ENCODE measurements at regions of chr20 and their contacts with region 1.

Region 1: GRCh38 chr20:11274141-11274594 is 600.4 kb upstream of the JAG1 start:
- DNase-seq: peak; percentile 81
- H3K4me3 ChIP-seq: no peak overlapping the region
- H3K27ac ChIP-seq: no peak overlapping the region
- H3K4me1 ChIP-seq: no peaks in the 10 kb centered on the region
- H3K27me3 ChIP-seq: no peaks in the 10 kb centered on the region
- CTCF ChIP-seq: peak; percentile 48 to 61

Region 2: DNA sequence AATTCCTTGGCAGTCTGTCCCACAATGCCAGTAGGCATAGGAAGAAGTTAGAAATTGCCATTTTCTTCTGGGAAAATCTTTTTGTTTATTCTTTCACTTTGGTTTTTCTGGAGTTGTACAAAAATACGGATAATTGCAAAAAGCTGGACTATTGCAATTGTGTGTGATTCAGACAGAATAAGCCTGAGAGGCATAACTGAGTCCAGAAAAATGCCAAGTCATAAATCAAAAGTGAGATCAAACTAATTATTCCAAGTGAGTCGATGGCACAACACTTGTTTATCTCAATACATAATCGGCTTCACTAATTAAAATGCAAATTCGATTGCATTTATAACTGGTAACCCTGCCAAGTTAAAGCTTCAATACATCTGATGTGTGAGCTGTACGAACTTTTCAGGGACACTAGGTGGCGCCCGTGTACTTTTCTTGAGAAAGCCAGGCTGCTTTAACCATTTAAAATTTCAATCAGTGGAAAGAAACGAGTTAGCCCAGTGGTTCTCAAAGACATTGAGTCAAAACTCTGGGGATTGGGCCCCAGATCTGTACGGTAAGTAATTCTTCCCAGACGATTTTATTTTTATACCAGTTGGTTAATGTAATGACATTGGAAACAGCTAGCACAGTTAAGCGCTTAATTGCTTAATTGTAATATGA is 1657.2 kb before region 1 on chr20:
- CTCF ChIA-PET with region 1: no interaction called
- dilution Hi-C with region 1: no loop called
- in situ Hi-C with region 1: no loop called
- intact Hi-C with region 1: loop called (anchors 5 kb)
- DNase-seq: peak; percentile 38
- H3K4me3 ChIP-seq: no peak overlapping the region
- H3K27ac ChIP-seq: no peak overlapping the region
- H3K4me1 ChIP-seq: no peaks in the 10 kb centered on the region
- H3K27me3 ChIP-seq: peaks cover 2% of the 10 kb centered on the region
- CTCF ChIP-seq: peak; percentile 76 to 81

Region 3: DNA sequence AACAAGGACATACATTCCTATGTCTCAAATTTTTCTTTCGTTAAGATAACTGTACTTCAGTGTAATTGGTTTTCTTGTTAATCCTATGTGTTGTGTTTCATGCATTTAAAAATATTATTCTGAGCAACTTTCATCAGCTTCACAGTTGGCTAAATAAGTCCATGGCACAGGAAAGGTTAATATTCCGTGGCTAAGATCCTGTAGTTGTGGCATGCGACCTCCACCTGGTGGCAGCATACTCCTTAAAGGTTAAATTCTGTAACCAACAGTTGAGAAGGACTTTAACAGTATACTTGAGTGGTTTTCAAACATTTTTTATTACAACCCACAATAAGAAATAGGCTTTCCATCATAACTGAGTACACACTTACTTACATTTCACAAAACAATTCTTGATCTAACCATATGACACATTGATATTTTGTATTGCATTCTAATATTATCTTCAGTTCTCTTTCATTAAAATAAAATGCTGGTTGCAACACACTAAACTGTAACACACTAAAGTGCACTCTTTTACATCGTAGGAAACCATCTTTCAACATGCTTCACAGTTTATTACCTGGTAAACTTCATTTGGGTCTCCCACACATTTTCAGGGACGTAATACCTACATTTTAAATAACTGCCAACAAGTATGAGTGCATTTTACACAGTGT is 720.7 kb before region 1 on chr20:
- CTCF ChIA-PET with region 1: no interaction called
- dilution Hi-C with region 1: no loop called
- in situ Hi-C with region 1: loop called in 1 of 2 experiments (anchors 5 kb)
- intact Hi-C with region 1: loop called (anchors 1 kb)
- DNase-seq: peak; percentile 69
- H3K4me3 ChIP-seq: no peak overlapping the region
- H3K27ac ChIP-seq: no peak overlapping the region
- H3K4me1 ChIP-seq: peaks cover 55% of the 10 kb centered on the region
- H3K27me3 ChIP-seq: no peaks in the 10 kb centered on the region
- CTCF ChIP-seq: peak; percentile 81 to 95

Region 4: DNA sequence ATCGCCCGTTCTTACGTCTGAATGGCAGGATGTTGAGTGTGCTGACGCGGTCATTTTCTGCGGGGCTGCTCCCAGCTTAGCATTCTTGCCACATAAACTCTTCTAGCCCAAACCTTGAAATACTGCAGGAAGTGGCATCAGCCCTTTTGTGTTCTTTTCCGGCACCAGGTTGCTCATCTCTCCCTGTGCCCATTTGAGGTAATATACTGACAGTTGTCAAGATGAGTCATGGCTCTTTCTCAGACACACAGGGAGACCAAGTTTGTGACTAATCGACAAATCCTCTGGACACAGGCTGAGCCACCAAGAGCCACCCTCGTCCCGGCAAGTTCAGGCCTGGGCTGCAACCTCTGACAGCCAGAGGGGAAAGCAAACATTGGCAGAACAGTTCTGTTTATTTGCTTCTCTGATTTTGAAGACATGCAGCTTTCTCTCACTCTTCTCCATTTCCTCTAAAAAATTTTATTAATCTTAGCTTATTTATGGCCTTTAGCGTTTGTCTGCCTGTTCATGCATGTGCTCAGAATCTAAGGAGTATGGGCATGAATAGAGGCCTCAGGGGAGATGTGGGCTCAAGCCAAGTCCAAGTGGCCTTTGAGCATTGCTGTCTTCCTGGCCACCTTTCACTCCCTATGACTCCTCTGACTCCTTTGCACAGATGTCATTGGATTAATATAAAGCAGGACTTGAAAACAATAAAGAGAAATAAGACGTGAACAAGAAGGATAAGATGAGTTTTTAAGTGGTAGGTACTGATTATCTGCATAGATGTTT is 272.2 kb before region 1 on chr20:
- CTCF ChIA-PET with region 1: no interaction called
- dilution Hi-C with region 1: no loop called
- in situ Hi-C with region 1: no loop called
- intact Hi-C with region 1: loop called (anchors 2 kb)
- DNase-seq: peak; percentile 99
- H3K4me3 ChIP-seq: no peak overlapping the region
- H3K27ac ChIP-seq: peak overlapping the region; percentile 89
- H3K4me1 ChIP-seq: peaks cover 35% of the 10 kb centered on the region
- H3K27me3 ChIP-seq: no peaks in the 10 kb centered on the region
- CTCF ChIP-seq: no peak

Region 5: DNA sequence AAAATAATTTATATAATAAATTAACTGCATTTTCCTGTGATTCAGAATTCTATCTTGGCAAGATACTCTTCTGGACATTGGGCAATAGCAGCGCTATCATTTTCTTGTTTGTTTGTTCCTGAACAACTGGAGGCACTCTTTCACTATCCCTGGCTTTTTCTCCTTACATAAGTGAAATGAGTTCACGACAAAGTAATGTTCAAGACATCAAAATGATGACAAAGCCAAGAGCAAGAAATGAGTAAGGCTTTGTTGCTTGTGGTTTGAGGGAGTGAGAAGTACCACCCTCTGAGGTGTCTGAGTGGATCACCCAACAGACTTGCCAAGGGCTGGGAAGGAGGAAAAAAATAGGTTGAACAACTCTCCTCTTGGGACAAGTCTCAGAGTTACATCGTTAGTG is 133.8 kb before region 1 on chr20:
- CTCF ChIA-PET with region 1: no interaction called
- dilution Hi-C with region 1: no loop called
- in situ Hi-C with region 1: no loop called
- intact Hi-C with region 1: loop called (anchors 1 kb)
- DNase-seq: peak; percentile 98
- H3K4me3 ChIP-seq: no peak overlapping the region
- H3K27ac ChIP-seq: peak overlapping the region; percentile 74
- H3K4me1 ChIP-seq: peaks cover 21% of the 10 kb centered on the region
- H3K27me3 ChIP-seq: no peaks in the 10 kb centered on the region
- CTCF ChIP-seq: peak in 1 of 2 donors; percentile 42

Region 6: GRCh38 chr20:11323816-11324215 is 49.6 kb after region 1 on chr20:
- CTCF ChIA-PET with region 1: no interaction called
- dilution Hi-C with region 1: no loop called
- in situ Hi-C with region 1: no loop called
- intact Hi-C with region 1: no loop called
- DNase-seq: no peak
- H3K4me3 ChIP-seq: no peak overlapping the region
- H3K27ac ChIP-seq: no peak overlapping the region
- H3K4me1 ChIP-seq: peaks cover 3% of the 10 kb centered on the region
- H3K27me3 ChIP-seq: no peaks in the 10 kb centered on the region
- CTCF ChIP-seq: no peak

Region 7: GRCh38 chr20:11350126-11351005 is 76.2 kb after region 1 on chr20:
- CTCF ChIA-PET with region 1: no interaction called
- dilution Hi-C with region 1: no loop called
- in situ Hi-C with region 1: no loop called
- intact Hi-C with region 1: loop called (anchors 1 kb)
- DNase-seq: peak; percentile 98
- H3K4me3 ChIP-seq: no peak overlapping the region
- H3K27ac ChIP-seq: peak overlapping the region; percentile 59
- H3K4me1 ChIP-seq: peaks cover 25% of the 10 kb centered on the region
- H3K27me3 ChIP-seq: no peaks in the 10 kb centered on the region
- CTCF ChIP-seq: peak; percentile 28 to 59